PC-9 (cell line): ENCODE measurements at regions of chr17 and their contacts with region 1.

Region 1: DNA sequence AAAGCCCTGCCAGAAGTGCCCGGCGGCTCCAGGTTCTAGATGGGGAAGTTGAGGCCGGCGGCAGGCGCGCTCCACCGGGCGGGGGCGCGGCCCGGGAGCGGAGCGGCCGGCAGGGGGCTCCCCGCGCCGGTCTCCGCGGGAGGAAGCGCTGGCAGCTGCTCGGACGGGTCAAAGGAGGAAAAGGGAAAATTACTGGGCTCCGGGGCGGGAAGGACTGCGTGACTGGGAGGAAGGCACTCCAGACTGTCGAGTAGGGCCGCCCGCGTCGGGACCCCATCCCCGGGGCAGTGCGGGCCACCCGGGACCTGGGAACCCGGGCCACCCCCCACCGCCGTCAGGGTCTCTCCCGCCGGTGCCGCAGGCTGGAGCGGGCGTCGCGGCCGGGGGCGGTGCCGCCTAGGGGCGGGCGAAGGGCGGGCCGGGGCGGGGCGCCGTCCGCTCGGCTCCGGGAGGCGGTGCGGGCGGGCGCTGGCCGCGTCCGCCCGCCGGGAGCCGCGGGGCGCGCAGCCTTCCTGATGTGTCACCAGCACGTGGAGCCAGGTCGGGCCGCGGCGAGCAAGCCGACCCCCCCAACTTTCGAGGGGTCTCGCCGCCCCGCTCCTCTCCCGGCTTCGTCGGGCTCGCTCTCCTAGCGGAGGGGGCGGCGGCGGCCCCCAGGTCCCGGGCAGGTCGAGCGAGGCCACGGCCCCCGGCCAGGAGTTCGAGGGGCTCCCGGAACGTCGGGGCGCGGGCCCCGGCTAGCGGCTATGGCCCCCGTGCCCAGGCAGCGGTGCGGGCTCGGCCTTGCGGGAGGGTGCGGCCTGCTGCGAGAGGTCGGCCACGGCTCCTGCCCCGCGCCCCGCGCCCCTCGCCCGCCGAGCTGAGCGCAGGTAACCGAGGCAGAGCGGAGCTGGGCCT is 167.5 kb downstream of the RAB11FIP4 start:
- DNase-seq: peak; percentile 67 to 80
- H3K4me3 ChIP-seq: peak overlapping the region; percentile 70
- H3K27ac ChIP-seq: peak overlapping the region; percentile 74
- H3K4me1 ChIP-seq: peaks cover 35% of the 10 kb centered on the region
- H3K27me3 ChIP-seq: no peaks in the 10 kb centered on the region
- CTCF ChIP-seq: peak; percentile 71

Region 2: GRCh38 chr17:31494259-31495021 is 64.6 kb before region 1 on chr17:
- CTCF ChIA-PET with region 1: interaction called, 12 read pairs
- POLR2A ChIA-PET with region 1: no interaction called
- intact Hi-C with region 1: no loop called
- DNase-seq: peak; percentile 35 to 80
- H3K4me3 ChIP-seq: no peak overlapping the region; the same call in 1 of the 2 replicates
- H3K27ac ChIP-seq: peak overlapping the region; percentile 79
- H3K4me1 ChIP-seq: peaks cover 80% of the 10 kb centered on the region
- H3K27me3 ChIP-seq: no peaks in the 10 kb centered on the region
- CTCF ChIP-seq: no peak

Region 3: GRCh38 chr17:31581022-31581490 is 22.1 kb after region 1 on chr17:
- CTCF ChIA-PET with region 1: interaction called, 6 read pairs
- POLR2A ChIA-PET with region 1: no interaction called
- intact Hi-C with region 1: loop called (anchors 2 kb)
- DNase-seq: peak; percentile 90 to 95
- H3K4me3 ChIP-seq: no peak overlapping the region
- H3K27ac ChIP-seq: peak overlapping the region; percentile 71
- H3K4me1 ChIP-seq: peaks cover 63% of the 10 kb centered on the region
- H3K27me3 ChIP-seq: no peaks in the 10 kb centered on the region
- CTCF ChIP-seq: no peak

Region 4: GRCh38 chr17:31596382-31597323 is 37.7 kb after region 1 on chr17:
- CTCF ChIA-PET with region 1: no interaction called
- POLR2A ChIA-PET with region 1: interaction called, 3 read pairs
- intact Hi-C with region 1: loop called (anchors 1 kb)
- DNase-seq: peak; percentile 88 to 94
- H3K4me3 ChIP-seq: no peak overlapping the region
- H3K27ac ChIP-seq: peak overlapping the region; percentile 71
- H3K4me1 ChIP-seq: peaks cover 47% of the 10 kb centered on the region
- H3K27me3 ChIP-seq: no peaks in the 10 kb centered on the region
- CTCF ChIP-seq: no peak

Region 5: DNA sequence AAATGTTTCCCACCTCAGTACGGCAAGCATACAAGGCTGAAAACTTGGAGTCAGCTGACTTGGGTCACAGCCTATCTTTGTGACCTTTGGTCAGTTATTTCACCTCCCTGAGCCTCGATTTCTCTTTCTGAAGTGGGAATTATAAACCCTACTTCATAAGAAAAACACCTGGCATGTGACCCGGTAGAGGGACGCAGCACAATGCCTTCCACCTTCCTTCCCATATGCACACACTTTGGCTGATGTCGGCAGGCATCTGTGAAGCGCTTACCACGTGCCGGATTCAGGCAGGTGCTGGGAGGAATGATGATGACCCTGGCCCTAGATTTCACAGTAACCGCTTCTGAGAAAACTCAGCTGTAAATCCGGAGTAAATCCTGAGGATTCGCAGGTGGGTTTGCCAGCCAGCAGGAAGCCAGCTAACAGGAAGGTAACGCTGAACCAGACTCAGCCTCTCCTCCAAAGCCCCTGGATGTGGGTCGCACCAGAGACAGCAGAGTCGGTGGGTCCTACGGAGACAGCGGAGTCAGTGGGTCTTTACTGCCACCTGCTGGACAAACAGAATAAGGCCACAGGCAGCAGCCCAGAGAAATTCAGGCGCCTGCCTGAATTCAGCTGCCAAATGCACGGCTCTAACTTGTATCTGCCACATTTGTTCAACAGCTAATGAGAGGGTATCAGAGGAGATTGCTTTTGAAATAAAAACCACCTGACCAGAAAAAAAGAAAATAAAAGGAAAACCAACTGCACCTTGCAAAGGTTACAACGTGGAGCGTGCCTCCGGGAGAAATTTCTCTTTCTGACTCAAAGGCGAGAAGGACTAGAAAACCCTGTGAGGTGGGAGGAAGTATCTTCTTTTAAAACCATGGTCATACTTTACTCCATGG is 283.4 kb after region 1 on chr17:
- CTCF ChIA-PET with region 1: interaction called, 11 read pairs
- POLR2A ChIA-PET with region 1: no interaction called
- intact Hi-C with region 1: loop called (anchors 1 kb)
- DNase-seq: peak; percentile 43 to 62
- H3K4me3 ChIP-seq: peak overlapping the region; percentile 42; the same call in 1 of the 2 replicates
- H3K27ac ChIP-seq: no peak overlapping the region
- H3K4me1 ChIP-seq: no peaks in the 10 kb centered on the region
- H3K27me3 ChIP-seq: no peaks in the 10 kb centered on the region
- CTCF ChIP-seq: peak; percentile 98

Region 6: GRCh38 chr17:31917065-31917529 is 358.1 kb after region 1 on chr17:
- CTCF ChIA-PET with region 1: no interaction called
- POLR2A ChIA-PET with region 1: no interaction called
- intact Hi-C with region 1: no loop called
- DNase-seq: no peak
- H3K4me3 ChIP-seq: no peak overlapping the region
- H3K27ac ChIP-seq: no peak overlapping the region
- H3K4me1 ChIP-seq: peaks cover 14% of the 10 kb centered on the region
- H3K27me3 ChIP-seq: no peaks in the 10 kb centered on the region
- CTCF ChIP-seq: no peak